Heart right ventricle (tissue), 16 donors: ENCODE measurements at regions of chr6 and their contacts with region 1.

Region 1: DNA sequence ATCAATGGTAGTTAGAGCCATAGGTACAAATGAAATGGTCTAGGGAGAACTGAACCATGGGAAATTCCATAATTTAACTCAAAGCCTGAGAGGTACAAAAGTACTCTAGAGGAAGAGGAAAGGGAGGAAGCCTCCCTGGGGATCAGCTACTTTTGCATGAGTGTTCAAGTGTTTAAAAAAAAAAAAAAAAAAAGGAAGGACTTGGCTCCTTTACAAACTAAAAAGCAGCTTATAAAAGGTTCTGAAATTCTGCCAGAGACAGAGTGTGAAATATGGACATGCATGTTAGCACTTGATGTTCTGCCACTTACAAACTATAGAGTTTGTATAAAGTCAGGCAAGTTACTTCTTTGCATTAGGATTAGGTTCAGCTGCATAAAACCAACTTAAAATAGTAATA is 290.0 kb downstream of the TBC1D7 start:
- DNase-seq: peak in 1 of 2 donors; percentile 51
- ATAC-seq: peak; percentile 47 to 90 (median 75)
- H3K4me3 ChIP-seq: no peak overlapping the region
- H3K27ac ChIP-seq: peak overlapping the region in 6 of 10 donors; percentile 30 to 66 (median 47)
- H3K4me1 ChIP-seq: peaks cover 0 to 32% (median 24%) of the 10 kb centered on the region in 9 donors
- H3K27me3 ChIP-seq: no peaks in the 10 kb centered on the region
- CTCF ChIP-seq: no peak

Region 2: GRCh38 chr6:12903246-12903645 is 135.1 kb before region 1 on chr6:
- intact Hi-C with region 1: no loop called
- DNase-seq: no peak
- ATAC-seq: peak in 7 of 8 donors; percentile 45 to 79 (median 50)
- H3K4me3 ChIP-seq: no peak overlapping the region
- H3K27ac ChIP-seq: peak overlapping the region in 1 of 10 donors; percentile 17
- H3K4me1 ChIP-seq: peaks cover 0 to 14% (median 0%) of the 10 kb centered on the region in 9 donors
- H3K27me3 ChIP-seq: peaks cover 0 to 7% (median 0%) of the 10 kb centered on the region in 7 donors
- CTCF ChIP-seq: no peak

Region 3: GRCh38 chr6:13079096-13079723 is 40.9 kb after region 1 on chr6:
- intact Hi-C with region 1: loop called in 1 of 10 experiments (anchors 5 kb)
- DNase-seq: no peak
- ATAC-seq: peak in 5 of 8 donors; percentile 28 to 49 (median 43)
- H3K4me3 ChIP-seq: no peak overlapping the region
- H3K27ac ChIP-seq: peak overlapping the region in 7 of 10 donors; percentile 2 to 66 (median 56)
- H3K4me1 ChIP-seq: peaks cover 16 to 71% (median 54%) of the 10 kb centered on the region in 9 donors
- H3K27me3 ChIP-seq: no peaks in the 10 kb centered on the region
- CTCF ChIP-seq: no peak

Region 4: GRCh38 chr6:13146442-13146841 is 108.1 kb after region 1 on chr6:
- intact Hi-C with region 1: no loop called
- DNase-seq: no peak
- ATAC-seq: no peak
- H3K4me3 ChIP-seq: no peak overlapping the region
- H3K27ac ChIP-seq: no peak overlapping the region
- H3K4me1 ChIP-seq: peaks cover 0 to 18% (median 5%) of the 10 kb centered on the region in 9 donors
- H3K27me3 ChIP-seq: no peaks in the 10 kb centered on the region
- CTCF ChIP-seq: no peak